Sciatic nerve (tissue), 2 donors: ENCODE measurements at regions of chr21 and their contacts with region 1.

Region 1: GRCh38 chr21:31142600-31142999 is 104.3 kb upstream of the KRTAP19-8 start:
- DNase-seq: no peak
- ATAC-seq: peak; percentile 23

Region 2: GRCh38 chr21:31098576-31099005 is 44.0 kb before region 1 on chr21:
- intact Hi-C with region 1: no loop called
- DNase-seq: peak; percentile 85
- ATAC-seq: peak; percentile 85

Region 3: GRCh38 chr21:31173881-31174555 is 31.4 kb after region 1 on chr21:
- intact Hi-C with region 1: loop called (anchors 1 kb)
- DNase-seq: no peak
- ATAC-seq: peak; percentile 78

Region 4: GRCh38 chr21:31387560-31388186 is 245.1 kb after region 1 on chr21:
- intact Hi-C with region 1: no loop called
- DNase-seq: no peak
- ATAC-seq: no peak